ENCODE measurements at regions of chr16 and their contacts with region 1.

Region 1: DNA sequence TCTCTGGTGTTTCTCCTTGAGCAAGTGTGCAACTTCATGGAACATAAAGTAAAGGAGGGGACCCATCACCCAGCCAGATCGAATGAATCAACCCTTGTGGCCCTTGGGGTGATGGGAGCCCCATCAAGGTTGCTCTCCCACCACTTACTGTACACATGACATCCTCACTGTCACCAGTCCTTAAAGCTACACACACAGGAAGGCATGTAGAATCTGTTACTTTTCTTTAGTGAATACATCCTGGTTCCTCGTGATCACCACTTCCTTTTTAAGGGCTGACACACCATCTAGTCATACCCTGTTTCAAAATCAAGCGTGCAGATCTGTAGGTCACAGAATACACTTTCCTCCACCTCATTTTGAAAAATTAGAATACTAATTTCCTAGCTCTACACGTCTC is 22.6 kb upstream of the MPHOSPH6 start:
- DNase-seq: peak; percentile 65
- ATAC-seq: peak; percentile 98
- H3K4me3 Mint-ChIP-seq: no peak overlapping the region
- H3K27ac Mint-ChIP-seq: peak overlapping the region; percentile 85
- H3K4me1 Mint-ChIP-seq: peaks cover 28% of the 10 kb centered on the region
- H3K27me3 Mint-ChIP-seq: peaks cover 14% of the 10 kb centered on the region

Region 2: GRCh38 chr16:81774348-81774747 is 418.3 kb before region 1 on chr16:
- CTCF ChIA-PET with region 1: no interaction called
- POLR2A ChIA-PET with region 1: no interaction called
- intact Hi-C with region 1: no loop called
- DNase-seq: no peak
- ATAC-seq: no peak
- H3K4me3 Mint-ChIP-seq: no peak overlapping the region
- H3K27ac Mint-ChIP-seq: no peak overlapping the region
- H3K4me1 Mint-ChIP-seq: peaks cover 1% of the 10 kb centered on the region
- H3K27me3 Mint-ChIP-seq: peaks cover 12% of the 10 kb centered on the region

Region 3: GRCh38 chr16:82011199-82011641 is 181.4 kb before region 1 on chr16 and contains the start of gene SDR42E1:
- CTCF ChIA-PET with region 1: no interaction called
- POLR2A ChIA-PET with region 1: no interaction called
- intact Hi-C with region 1: loop called in 1 of 2 experiments (anchors 2 kb)
- DNase-seq: peak; percentile 82
- ATAC-seq: peak; percentile 80
- H3K4me3 Mint-ChIP-seq: peak within 1 kb of the TSS; percentile 84
- H3K27ac Mint-ChIP-seq: peak within 1 kb of the TSS; percentile 93
- H3K4me1 Mint-ChIP-seq: peaks cover 24% of the 10 kb centered on the region
- H3K27me3 Mint-ChIP-seq: peaks cover 13% of the 10 kb centered on the region
- total RNA-seq, gene SDR42E1: 7.4 to 8.2 TPM

Measured in activated CD4-positive, alpha-beta T cell treated with anti-CD3 and anti-CD28 coated beads for 36 hours (primary cell).